Right cardiac atrium (tissue), 5 donors: ENCODE measurements at regions of chr20 and their contacts with region 1.

Region 1: GRCh38 chr20:63782051-63782471 is 42.5 kb downstream of the SLC2A4RG start:
- DNase-seq: peak in 1 of 3 donors; percentile 24
- ATAC-seq: no peak
- H3K4me3 ChIP-seq: no peak overlapping the region
- H3K27ac ChIP-seq: no peak overlapping the region
- H3K4me1 ChIP-seq: no peaks in the 10 kb centered on the region
- H3K27me3 ChIP-seq: no peaks in the 10 kb centered on the region

Region 2: DNA sequence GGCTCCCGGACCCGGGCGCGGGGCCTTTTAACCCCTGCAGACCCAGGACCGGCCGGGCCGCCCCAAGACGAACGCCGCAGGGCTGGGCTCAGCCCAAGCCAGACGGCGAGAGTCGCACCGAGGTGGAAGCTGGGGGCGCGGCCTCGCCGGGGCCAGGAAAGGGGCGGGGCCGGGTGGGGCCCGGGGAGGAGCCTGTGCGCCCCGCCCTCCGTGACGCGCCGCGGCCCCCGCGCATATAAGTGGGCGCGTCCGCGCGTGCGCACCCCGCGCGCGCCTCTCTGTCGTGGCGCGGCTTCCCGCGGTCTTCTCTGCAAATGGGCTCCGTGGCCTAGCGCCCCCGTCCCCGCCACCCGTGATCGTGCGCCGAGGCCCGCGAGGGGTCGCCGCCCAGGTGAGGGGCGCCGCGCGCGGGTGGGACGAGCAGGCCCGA is 261.5 kb before region 1 on chr20 and contains the start of gene PPDPF:
- intact Hi-C with region 1: no loop called
- DNase-seq: peak; percentile 83 to 96 (median 94)
- ATAC-seq: peak; percentile 89 to 90
- H3K4me3 ChIP-seq: peak within 1 kb of the TSS; percentile 80
- H3K27ac ChIP-seq: peak within 1 kb of the TSS; percentile 73
- H3K4me1 ChIP-seq: peaks cover 5% of the 10 kb centered on the region
- H3K27me3 ChIP-seq: no peaks in the 10 kb centered on the region
- total RNA-seq, gene PPDPF: 143 to 244 (median 223) TPM

Region 3: GRCh38 chr20:63698739-63699465 is 83.2 kb before region 1 on chr20:
- intact Hi-C with region 1: no loop called
- DNase-seq: peak; percentile 74 to 80 (median 78)
- ATAC-seq: peak in 1 of 2 donors; percentile 39
- H3K4me3 ChIP-seq: no peak overlapping the region
- H3K27ac ChIP-seq: peak overlapping the region; percentile 7
- H3K4me1 ChIP-seq: no peaks in the 10 kb centered on the region
- H3K27me3 ChIP-seq: no peaks in the 10 kb centered on the region

Region 4: GRCh38 chr20:63864847-63865640 is 83.0 kb after region 1 on chr20 and contains the start of gene TPD52L2:
- intact Hi-C with region 1: loop called in 2 of 4 experiments (anchors 2 to 5 kb)
- DNase-seq: peak; percentile 98 to 99 (median 99)
- ATAC-seq: peak; percentile 96 to 97
- H3K4me3 ChIP-seq: peak within 1 kb of the TSS; percentile 73
- H3K27ac ChIP-seq: peak within 1 kb of the TSS; percentile 88
- H3K4me1 ChIP-seq: peaks cover 3% of the 10 kb centered on the region
- H3K27me3 ChIP-seq: no peaks in the 10 kb centered on the region
- total RNA-seq, gene TPD52L2: 62.1 to 73.5 (median 63.6) TPM